ENCODE measurements at regions of chr2 and their contacts with region 1.

Region 1: GRCh38 chr2:173631127-173631460 is 276.4 kb downstream of the CDCA7 start:
- DNase-seq: no peak
- H3K4me3 ChIP-seq: no peak overlapping the region
- H3K27ac ChIP-seq: no peak overlapping the region
- H3K4me1 ChIP-seq: no peaks in the 10 kb centered on the region
- H3K27me3 ChIP-seq: no peaks in the 10 kb centered on the region
- CTCF ChIP-seq: no peak
- POLR2A ChIP-seq: no peak

Region 2: DNA sequence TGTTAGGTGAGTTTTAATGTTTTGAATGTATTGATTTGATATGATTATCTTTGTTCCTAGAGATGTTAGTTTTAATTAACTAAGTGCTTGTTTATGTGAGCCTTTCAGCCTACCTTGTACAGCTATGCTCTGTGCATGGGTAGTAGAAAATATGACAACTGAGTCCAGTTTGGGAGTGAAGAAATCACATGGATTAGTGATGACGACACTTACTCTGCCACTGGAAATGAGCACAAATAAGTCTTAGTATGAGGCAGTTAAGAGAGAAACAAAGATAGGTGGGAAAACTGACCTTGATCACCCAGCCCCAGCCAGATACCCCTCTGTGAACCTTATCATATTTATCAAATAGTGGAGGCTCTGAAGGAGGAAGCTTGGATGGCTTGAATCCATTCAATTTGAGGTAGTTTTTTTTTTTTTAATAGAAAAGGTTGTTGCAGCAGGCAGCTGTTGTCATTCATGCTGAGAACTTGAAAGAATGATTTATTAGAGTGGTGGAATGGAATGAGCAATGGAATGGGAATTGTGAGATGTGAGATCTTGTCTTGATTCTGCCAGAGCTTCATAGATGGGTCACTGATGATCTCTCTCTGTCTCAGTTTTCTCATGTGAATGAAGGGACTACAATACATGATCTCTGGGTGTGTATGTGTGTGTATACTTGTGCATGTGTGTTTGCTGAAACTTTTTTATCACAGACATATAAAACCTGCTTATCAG is 459.0 kb before region 1 on chr2:
- intact Hi-C with region 1: no loop called
- DNase-seq: no peak
- H3K4me3 ChIP-seq: no peak overlapping the region
- H3K27ac ChIP-seq: no peak overlapping the region
- H3K4me1 ChIP-seq: no peaks in the 10 kb centered on the region
- H3K27me3 ChIP-seq: no peaks in the 10 kb centered on the region
- CTCF ChIP-seq: no peak
- POLR2A ChIP-seq: no peak

Region 3: GRCh38 chr2:173667417-173667816 is 36.3 kb after region 1 on chr2:
- intact Hi-C with region 1: no loop called
- DNase-seq: no peak
- H3K4me3 ChIP-seq: no peak overlapping the region
- H3K27ac ChIP-seq: no peak overlapping the region
- H3K4me1 ChIP-seq: no peaks in the 10 kb centered on the region
- H3K27me3 ChIP-seq: no peaks in the 10 kb centered on the region
- CTCF ChIP-seq: no peak
- POLR2A ChIP-seq: no peak

Region 4: GRCh38 chr2:173752152-173752551 is 121.1 kb after region 1 on chr2:
- intact Hi-C with region 1: loop called (anchors 5 kb)
- DNase-seq: no peak
- H3K4me3 ChIP-seq: no peak overlapping the region
- H3K27ac ChIP-seq: no peak overlapping the region
- H3K4me1 ChIP-seq: no peaks in the 10 kb centered on the region
- H3K27me3 ChIP-seq: no peaks in the 10 kb centered on the region
- CTCF ChIP-seq: no peak
- POLR2A ChIP-seq: no peak

Region 5: GRCh38 chr2:173793709-173794565 is 162.8 kb after region 1 on chr2:
- intact Hi-C with region 1: loop called (anchors 5 kb)
- DNase-seq: no peak
- H3K4me3 ChIP-seq: no peak overlapping the region
- H3K27ac ChIP-seq: no peak overlapping the region
- H3K4me1 ChIP-seq: no peaks in the 10 kb centered on the region
- H3K27me3 ChIP-seq: no peaks in the 10 kb centered on the region
- CTCF ChIP-seq: no peak
- POLR2A ChIP-seq: no peak

Measured in breast epithelium (tissue), 4 donors.